Activated CD8-positive, alpha-beta T cell treated with anti-CD3 and anti-CD28 coated beads, Interleukin-2, amount 10 ng/mL, durations not matched to agents 7 days and 5 days (primary cell): ENCODE measurements at regions of chr2 and their contacts with region 1.

Region 1: GRCh38 chr2:112685271-112685884 is 35.4 kb upstream of the NT5DC4 start:
- DNase-seq: no peak
- ATAC-seq: peak; percentile 45
- H3K4me3 Mint-ChIP-seq: no peak overlapping the region
- H3K27ac Mint-ChIP-seq: no peak overlapping the region
- H3K4me1 Mint-ChIP-seq: peaks cover 22% of the 10 kb centered on the region
- H3K27me3 Mint-ChIP-seq: peaks cover 13% of the 10 kb centered on the region

Region 2: DNA sequence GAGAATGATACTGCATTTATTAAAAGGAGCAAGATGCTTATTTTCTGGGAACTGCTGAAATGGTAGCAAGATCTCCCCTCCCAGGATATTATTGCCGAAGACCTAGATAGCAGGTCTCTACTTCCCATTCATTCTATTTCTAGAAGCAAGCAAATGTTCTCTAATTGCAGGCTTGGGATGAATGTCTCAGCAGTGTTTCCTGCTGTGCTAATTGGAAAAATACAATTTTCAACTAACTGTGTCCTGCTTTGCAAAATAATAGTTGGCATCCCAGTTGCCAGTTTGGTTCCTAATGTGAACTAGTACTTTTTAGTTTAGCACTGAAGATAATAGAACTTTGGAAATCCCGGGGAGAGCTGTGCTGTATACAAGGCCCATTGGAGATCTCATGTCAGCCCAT is 13.6 kb before region 1 on chr2:
- CTCF ChIA-PET with region 1: interaction called, 10 read pairs
- POLR2A ChIA-PET with region 1: interaction called, 3 read pairs
- DNase-seq: no peak
- ATAC-seq: no peak
- H3K4me3 Mint-ChIP-seq: no peak overlapping the region
- H3K27ac Mint-ChIP-seq: no peak overlapping the region
- H3K4me1 Mint-ChIP-seq: peaks cover 12% of the 10 kb centered on the region
- H3K27me3 Mint-ChIP-seq: peaks cover 5% of the 10 kb centered on the region

Region 3: DNA sequence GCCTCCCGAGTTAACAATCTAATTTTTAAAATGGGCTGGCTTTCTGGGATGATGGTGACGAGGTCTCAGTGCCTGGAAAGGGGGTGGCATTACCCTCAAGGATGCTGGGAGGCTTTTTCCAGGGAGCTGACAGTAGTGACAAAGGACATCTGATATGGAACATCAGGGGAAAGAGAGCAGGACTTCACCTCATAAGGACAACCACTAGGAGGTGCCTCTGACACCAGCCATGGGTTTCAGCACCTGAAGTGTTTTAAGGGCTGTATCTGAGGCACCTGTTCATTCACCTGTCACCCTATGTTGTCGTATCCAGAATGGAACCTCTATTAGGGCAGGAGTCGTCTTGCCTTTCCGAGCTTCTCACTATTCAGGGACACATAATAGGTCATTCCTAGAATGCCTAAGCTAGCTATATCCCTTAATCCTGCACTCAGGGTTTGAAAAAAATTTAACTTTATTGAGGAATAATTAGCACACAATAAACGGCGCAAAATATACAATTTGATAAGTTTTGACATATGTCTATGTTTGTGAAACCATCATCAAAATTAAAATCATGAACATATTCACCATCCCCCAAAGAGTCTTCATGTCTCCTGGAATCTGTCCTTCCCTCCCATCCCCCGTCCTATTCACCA is 356.6 kb after region 1 on chr2:
- CTCF ChIA-PET with region 1: no interaction called
- POLR2A ChIA-PET with region 1: no interaction called
- DNase-seq: no peak
- ATAC-seq: no peak
- H3K4me3 Mint-ChIP-seq: no peak overlapping the region
- H3K27ac Mint-ChIP-seq: no peak overlapping the region
- H3K4me1 Mint-ChIP-seq: no peaks in the 10 kb centered on the region
- H3K27me3 Mint-ChIP-seq: peaks cover 8% of the 10 kb centered on the region